Left lung (tissue), 14 donors: ENCODE measurements at regions of chr19 and their contacts with region 1.

Region 1: DNA sequence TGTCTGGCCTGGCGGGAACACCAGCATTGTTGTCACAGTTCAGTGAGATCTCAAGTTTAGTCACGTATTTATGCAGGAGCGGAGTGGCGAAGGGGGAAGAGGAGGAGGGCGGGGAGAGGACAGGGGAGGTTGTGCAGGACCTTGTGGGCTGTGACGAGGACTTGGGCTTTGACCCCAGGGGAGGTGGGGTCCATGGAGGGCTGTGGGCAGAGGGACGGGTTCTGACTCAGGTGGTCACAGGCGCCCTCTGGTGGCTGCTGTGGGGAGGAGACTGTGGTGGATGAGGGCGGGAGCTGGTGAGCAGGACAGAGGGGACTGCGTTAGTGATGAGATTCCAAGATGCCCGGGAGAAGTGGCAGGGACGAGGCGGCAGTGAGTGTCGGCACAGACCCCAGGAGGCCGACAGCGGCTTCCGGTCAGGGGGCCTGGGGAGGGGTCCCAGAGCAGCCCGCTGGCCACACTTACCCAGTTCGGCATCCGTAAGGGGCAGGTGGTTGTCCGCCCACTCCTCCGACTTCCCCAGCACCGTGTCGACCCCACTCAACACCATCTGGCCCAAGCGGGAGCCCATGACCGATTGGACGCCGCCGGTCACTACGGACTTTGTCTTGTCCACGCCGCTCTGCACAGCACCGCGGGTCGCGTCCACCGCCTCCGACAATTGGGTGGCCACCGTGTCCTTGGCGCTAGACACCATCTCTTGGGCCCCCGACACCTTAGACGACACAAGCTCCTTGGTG is 15.7 kb downstream of the PLIN3 start:
- DNase-seq: peak; percentile 31 to 90 (median 57)
- ATAC-seq: peak; percentile 90
- H3K4me3 ChIP-seq: no peak overlapping the region
- H3K27ac ChIP-seq: no peak overlapping the region
- H3K4me1 ChIP-seq: no peaks in the 10 kb centered on the region
- H3K27me3 ChIP-seq: no peaks in the 10 kb centered on the region
- CTCF ChIP-seq: peak; percentile 53 to 82

Region 2: DNA sequence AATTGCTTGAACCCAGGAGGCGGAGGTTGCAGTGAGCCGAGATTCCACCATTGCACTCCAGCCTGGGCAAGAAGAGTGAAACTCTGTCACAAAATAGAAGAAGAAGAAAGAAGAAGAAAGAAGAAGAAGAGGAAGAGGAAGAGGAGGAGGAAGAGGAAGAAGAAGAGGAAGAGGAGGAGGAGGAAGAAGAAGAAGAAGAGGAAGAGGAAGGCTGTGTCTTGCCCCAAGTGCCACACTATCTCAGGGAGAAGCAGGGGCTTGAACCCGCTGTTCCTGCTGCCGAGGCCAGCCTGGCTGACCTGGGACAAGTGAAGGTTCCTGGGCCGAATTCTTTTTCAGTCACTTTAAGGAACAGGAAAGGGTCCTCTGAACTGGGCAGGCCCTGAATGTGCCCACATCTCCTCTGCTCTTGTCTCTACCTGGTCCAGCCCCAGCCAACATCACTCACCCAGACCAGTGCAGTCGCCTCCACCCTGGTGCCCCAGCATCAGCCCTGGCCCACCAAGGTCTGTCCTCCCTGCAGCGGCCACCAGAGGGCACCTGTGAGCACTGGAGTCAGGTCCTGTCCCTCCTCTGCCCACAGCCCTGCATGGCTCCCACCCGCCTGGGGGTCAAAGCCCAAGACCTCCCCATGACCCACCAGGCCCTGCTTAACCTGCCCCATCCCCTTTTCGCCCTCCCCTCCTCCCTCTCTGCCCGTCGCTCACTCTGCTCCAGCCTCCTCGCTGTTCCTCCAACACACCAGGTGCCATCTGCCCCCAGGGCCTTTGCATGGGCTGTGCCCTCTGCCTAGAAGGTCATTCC is 40.2 kb before region 1 on chr19:
- intact Hi-C with region 1: loop called in 1 of 2 experiments (anchors 5 kb)
- DNase-seq: peak in 3 of 4 donors; percentile 53 to 95 (median 83)
- ATAC-seq: peak; percentile 58
- H3K4me3 ChIP-seq: no peak overlapping the region
- H3K27ac ChIP-seq: peak overlapping the region in 1 of 2 donors; percentile 91
- H3K4me1 ChIP-seq: peaks cover 0 to 92% of the 10 kb centered on the region in 2 donors
- H3K27me3 ChIP-seq: no peaks in the 10 kb centered on the region
- CTCF ChIP-seq: peak; percentile 80 to 89

Region 3: DNA sequence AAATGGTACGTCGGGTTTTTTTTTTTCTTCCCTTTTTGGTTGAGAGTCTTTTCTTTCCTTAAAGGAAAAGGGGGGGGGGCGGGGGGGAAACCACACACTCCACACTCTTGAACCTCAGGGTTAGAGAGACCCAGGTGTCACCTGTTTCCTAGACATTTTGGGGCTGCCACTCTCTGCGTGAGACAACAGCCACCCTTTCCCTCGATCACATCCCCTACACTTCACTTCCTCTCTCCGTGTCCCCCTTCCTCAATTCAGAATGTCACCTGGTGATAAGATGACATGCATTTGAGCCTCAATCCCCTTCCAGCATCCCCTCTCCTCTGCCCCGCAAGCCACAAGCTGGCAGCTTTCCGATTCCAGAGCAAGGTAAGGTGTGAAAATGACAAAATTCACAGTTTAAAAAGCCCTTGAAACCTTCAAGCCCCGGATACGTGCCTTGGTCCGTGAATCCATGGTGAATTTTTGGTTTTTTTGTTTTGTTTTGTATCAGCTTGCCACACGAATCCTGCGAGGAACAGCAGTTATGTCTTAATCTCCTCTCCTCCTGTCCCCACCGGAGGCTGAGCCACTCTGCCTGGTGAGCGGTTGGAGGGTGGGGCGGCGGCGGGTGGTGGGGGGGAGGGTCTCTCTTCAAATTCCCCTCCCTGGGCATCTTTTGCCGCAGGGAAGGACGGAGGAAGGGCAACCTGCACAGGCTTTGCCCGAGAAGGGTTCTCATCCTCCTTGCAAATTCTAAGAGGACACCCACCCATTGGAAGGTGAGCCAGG is 484.7 kb after region 1 on chr19:
- intact Hi-C with region 1: no loop called
- DNase-seq: no peak
- ATAC-seq: no peak
- H3K4me3 ChIP-seq: no peak overlapping the region
- H3K27ac ChIP-seq: no peak overlapping the region
- H3K4me1 ChIP-seq: peaks cover 0 to 13% of the 10 kb centered on the region in 2 donors
- H3K27me3 ChIP-seq: peaks cover 36 to 89% of the 10 kb centered on the region in 2 donors
- CTCF ChIP-seq: no peak